Sciatic nerve (tissue), 2 donors: ENCODE measurements at regions of chr2 and their contacts with region 1.

Region 1: GRCh38 chr2:232410238-232410900 is 3.7 kb downstream of the ALPG start:
- DNase-seq: no peak
- ATAC-seq: no peak

Region 2: DNA sequence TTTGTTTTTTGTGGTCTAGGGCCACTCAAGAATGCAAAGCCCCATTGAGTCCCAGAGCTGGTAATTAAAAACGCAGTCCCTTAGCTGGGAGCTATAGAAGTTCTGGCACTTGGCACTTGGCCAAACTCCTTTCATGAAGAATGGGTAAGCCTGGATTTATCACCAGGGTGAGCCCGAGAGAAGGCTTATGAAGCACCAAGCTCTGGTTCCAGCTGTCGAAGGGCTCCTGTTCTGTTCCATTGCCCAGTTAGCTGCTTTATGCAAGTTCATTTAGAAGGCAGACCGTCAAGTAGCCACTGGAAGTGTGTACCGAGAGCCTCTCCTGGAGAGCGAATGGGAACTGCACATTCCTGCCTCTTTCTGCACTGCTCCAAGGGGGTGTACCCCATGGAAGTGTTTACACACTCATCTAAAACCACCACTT is 63.1 kb after region 1 on chr2:
- intact Hi-C with region 1: no loop called
- DNase-seq: peak; percentile 33
- ATAC-seq: no peak

Region 3: GRCh38 chr2:233135421-233135820 is 725.1 kb after region 1 on chr2:
- intact Hi-C with region 1: loop called (anchors 5 kb)
- DNase-seq: no peak
- ATAC-seq: no peak